A673 (cell line): ENCODE measurements at regions of chr3 and their contacts with region 1.

Region 1: GRCh38 chr3:150763122-150763841 is at the start of gene SIAH2:
- DNase-seq: peak; percentile 96
- H3K4me3 ChIP-seq: peak within 1 kb of the TSS; percentile 98
- H3K27ac ChIP-seq: peak within 1 kb of the TSS; percentile 87
- H3K4me1 ChIP-seq: peaks cover 24% of the 10 kb centered on the region
- H3K27me3 ChIP-seq: no peaks in the 10 kb centered on the region
- CTCF ChIP-seq: no peak
- total RNA-seq, gene SIAH2: 26.8 and 28.8 TPM in 2 replicates

Region 2: GRCh38 chr3:150495563-150496168 is 267.6 kb before region 1 on chr3:
- CTCF ChIA-PET with region 1: no interaction called
- POLR2A ChIA-PET with region 1: no interaction called
- intact Hi-C with region 1: no loop called
- DNase-seq: peak; percentile 73
- H3K4me3 ChIP-seq: no peak overlapping the region
- H3K27ac ChIP-seq: no peak overlapping the region
- H3K4me1 ChIP-seq: no peaks in the 10 kb centered on the region
- H3K27me3 ChIP-seq: no peaks in the 10 kb centered on the region
- CTCF ChIP-seq: peak; percentile 75

Region 3: GRCh38 chr3:150546226-150547044 is 216.8 kb before region 1 on chr3 and contains the starts of genes EIF2A and SERP1:
- CTCF ChIA-PET with region 1: no interaction called
- POLR2A ChIA-PET with region 1: no interaction called
- intact Hi-C with region 1: loop called (anchors 5 kb)
- DNase-seq: peak; percentile 99
- H3K4me3 ChIP-seq: peak within 1 kb of the TSS; percentile 74
- H3K27ac ChIP-seq: peak within 1 kb of the TSS; percentile 98
- H3K4me1 ChIP-seq: peaks cover 18% of the 10 kb centered on the region
- H3K27me3 ChIP-seq: no peaks in the 10 kb centered on the region
- CTCF ChIP-seq: no peak
- total RNA-seq, gene EIF2A: 105 and 113 TPM in 2 replicates
- total RNA-seq, gene SERP1: 86.5 and 91.7 TPM in 2 replicates

Region 4: GRCh38 chr3:150721285-150722130 is 41.8 kb before region 1 on chr3:
- CTCF ChIA-PET with region 1: interaction called, 3 read pairs
- POLR2A ChIA-PET with region 1: no interaction called
- intact Hi-C with region 1: loop called (anchors 5 kb)
- DNase-seq: peak; percentile 84
- H3K4me3 ChIP-seq: no peak overlapping the region
- H3K27ac ChIP-seq: no peak overlapping the region
- H3K4me1 ChIP-seq: peaks cover 11% of the 10 kb centered on the region
- H3K27me3 ChIP-seq: no peaks in the 10 kb centered on the region
- CTCF ChIP-seq: peak; percentile 82

Region 5: GRCh38 chr3:150922611-150923010 is 159.3 kb after region 1 on chr3:
- CTCF ChIA-PET with region 1: no interaction called
- POLR2A ChIA-PET with region 1: no interaction called
- intact Hi-C with region 1: no loop called
- DNase-seq: peak; percentile 46
- H3K4me3 ChIP-seq: no peak overlapping the region
- H3K27ac ChIP-seq: no peak overlapping the region
- H3K4me1 ChIP-seq: no peaks in the 10 kb centered on the region
- H3K27me3 ChIP-seq: peaks cover 3% of the 10 kb centered on the region
- CTCF ChIP-seq: no peak